ENCODE measurements at regions of chr6 and their contacts with region 1.

Region 1: GRCh38 chr6:3023663-3024483 is 24.2 kb downstream of the NQO2 start:
- DNase-seq: peak; percentile 94
- H3K4me3 Mint-ChIP-seq: peak overlapping the region; percentile 90
- H3K27ac Mint-ChIP-seq: peak overlapping the region; percentile 98
- H3K4me1 Mint-ChIP-seq: peaks cover 78% of the 10 kb centered on the region
- H3K27me3 Mint-ChIP-seq: no peaks in the 10 kb centered on the region

Region 2: GRCh38 chr6:2999618-3000557 is 24.0 kb before region 1 on chr6 and contains the start of gene NQO2:
- CTCF ChIA-PET with region 1: interaction called, 50 read pairs
- POLR2A ChIA-PET with region 1: interaction called, 91 read pairs
- DNase-seq: peak; percentile 94
- H3K4me3 Mint-ChIP-seq: peak within 1 kb of the TSS; percentile 88
- H3K27ac Mint-ChIP-seq: peak within 1 kb of the TSS; percentile 83
- H3K4me1 Mint-ChIP-seq: peaks cover 35% of the 10 kb centered on the region
- H3K27me3 Mint-ChIP-seq: peaks cover 2% of the 10 kb centered on the region
- total RNA-seq, gene NQO2: 37.7 to 38.4 TPM

Region 3: DNA sequence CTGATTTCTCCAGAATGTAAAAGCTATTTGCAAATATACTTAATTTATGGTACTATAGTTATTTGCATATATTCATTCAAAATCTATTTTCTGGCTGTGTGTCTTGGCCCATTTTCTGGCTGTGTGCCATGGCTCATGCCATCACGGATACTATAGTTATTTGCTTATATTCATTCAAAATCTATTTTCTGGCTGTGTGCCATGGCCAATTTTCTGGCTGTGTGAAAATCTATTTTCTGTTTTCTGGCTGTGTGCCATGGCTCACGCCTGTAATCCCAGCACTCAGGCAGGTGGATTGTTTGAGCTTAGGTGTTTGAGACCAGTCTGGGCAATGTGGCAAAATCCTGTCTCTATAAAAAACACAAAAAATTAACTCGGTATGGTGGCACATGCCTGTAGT is 15.5 kb after region 1 on chr6:
- CTCF ChIA-PET with region 1: interaction called, 8 read pairs
- POLR2A ChIA-PET with region 1: interaction called, 15 read pairs
- DNase-seq: no peak
- H3K4me3 Mint-ChIP-seq: no peak overlapping the region
- H3K27ac Mint-ChIP-seq: no peak overlapping the region
- H3K4me1 Mint-ChIP-seq: no peaks in the 10 kb centered on the region
- H3K27me3 Mint-ChIP-seq: peaks cover 22% of the 10 kb centered on the region

Region 4: GRCh38 chr6:3052481-3053230 is 28.8 kb after region 1 on chr6:
- CTCF ChIA-PET with region 1: interaction called, 7 read pairs
- POLR2A ChIA-PET with region 1: interaction called, 32 read pairs
- DNase-seq: no peak
- H3K4me3 Mint-ChIP-seq: peak overlapping the region; percentile 72
- H3K27ac Mint-ChIP-seq: peak overlapping the region; percentile 51
- H3K4me1 Mint-ChIP-seq: peaks cover 33% of the 10 kb centered on the region
- H3K27me3 Mint-ChIP-seq: peaks cover 15% of the 10 kb centered on the region

Region 5: GRCh38 chr6:3068329-3069214 is 44.7 kb after region 1 on chr6 and contains the start of gene RIPK1:
- CTCF ChIA-PET with region 1: interaction called, 3 read pairs
- POLR2A ChIA-PET with region 1: interaction called, 24 read pairs
- DNase-seq: peak; percentile 95
- H3K4me3 Mint-ChIP-seq: peak within 1 kb of the TSS; percentile 98
- H3K27ac Mint-ChIP-seq: peak within 1 kb of the TSS; percentile 99
- H3K4me1 Mint-ChIP-seq: peaks cover 76% of the 10 kb centered on the region
- H3K27me3 Mint-ChIP-seq: no peaks in the 10 kb centered on the region
- total RNA-seq, gene RIPK1: 33.1 to 33.3 TPM